ENCODE measurements at regions of chr5 and their contacts with region 1.

Region 1: DNA sequence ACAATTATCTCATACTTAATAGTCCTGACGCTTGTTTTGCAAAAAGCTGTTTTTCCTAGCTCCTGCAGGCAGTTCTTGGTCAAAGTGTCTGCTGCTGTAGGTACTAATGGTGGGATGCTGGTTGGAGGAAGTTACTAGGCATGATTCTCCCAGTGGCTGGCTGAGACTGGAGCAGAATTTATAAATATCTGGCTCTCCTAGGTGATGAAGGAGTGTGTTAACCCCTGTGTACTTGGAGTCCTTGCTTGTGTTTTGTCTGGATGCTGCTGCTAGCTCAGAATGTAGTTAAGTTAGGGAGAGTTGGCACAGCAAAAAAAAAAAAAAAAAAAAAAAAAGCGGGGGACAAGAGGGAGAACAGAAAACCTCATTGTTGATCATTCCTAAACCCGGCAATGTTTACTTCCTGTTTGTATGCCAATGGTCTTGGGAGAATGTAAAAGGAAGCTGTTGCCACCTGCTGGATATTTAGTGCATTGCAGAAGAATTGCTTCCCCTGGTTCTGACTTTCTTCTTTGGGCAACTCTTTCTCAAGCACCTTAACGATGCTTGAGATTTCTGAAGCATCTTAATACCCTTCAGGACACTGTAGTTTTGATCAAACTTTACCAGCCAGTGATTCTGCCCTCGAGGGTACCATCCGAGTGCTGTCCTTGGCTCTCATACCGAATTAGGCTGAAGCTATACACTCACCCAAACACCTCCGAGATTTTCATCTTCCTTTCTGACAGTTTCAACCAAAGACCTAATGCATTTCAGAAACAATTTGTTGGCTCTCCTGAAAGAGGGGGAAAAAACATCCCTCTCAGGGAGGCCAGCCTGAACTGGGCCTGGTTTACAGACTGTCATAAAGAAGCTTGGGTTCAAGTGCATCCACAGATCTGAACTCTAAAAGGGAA is 71.7 kb upstream of the WWC1 start:
- DNase-seq: peak; percentile 28
- H3K4me3 Mint-ChIP-seq: no peak overlapping the region
- H3K27ac Mint-ChIP-seq: no peak overlapping the region
- H3K4me1 Mint-ChIP-seq: peaks cover 6% of the 10 kb centered on the region
- H3K27me3 Mint-ChIP-seq: peaks cover 19% of the 10 kb centered on the region

Region 2: DNA sequence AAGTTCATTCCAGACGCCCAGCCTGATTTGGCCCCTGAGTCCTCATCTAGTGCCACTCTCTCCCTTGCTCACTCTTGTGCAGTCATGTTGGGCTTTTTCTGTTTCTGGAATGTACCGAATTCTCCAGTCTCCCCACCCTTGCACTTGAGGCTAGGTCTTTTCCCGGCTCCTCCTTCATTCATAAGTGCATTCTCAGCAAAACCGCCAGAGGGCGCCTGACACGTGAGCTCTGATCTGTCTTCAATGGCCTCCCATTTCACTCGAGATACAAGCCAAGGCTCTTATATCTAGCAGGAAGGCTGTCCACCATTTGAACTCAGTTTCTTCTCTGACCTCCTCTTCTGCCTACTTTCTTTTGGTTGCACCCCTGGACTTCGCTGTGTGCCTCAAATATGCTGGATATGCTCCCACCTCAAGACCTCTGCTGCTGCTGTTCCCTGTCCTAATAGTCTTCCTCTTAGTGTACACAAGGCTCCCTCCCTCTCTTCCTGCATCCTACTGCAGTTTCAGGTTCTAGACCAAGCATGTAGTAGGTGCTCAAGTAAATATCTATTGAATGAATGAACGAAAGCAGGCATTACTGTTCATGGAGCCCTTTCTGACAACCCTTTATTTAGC is 496.4 kb before region 1 on chr5:
- intact Hi-C with region 1: loop called (anchors 1 kb)
- DNase-seq: peak; percentile 48
- H3K4me3 Mint-ChIP-seq: no peak overlapping the region
- H3K27ac Mint-ChIP-seq: no peak overlapping the region
- H3K4me1 Mint-ChIP-seq: peaks cover 1% of the 10 kb centered on the region
- H3K27me3 Mint-ChIP-seq: no peaks in the 10 kb centered on the region

Region 3: GRCh38 chr5:168114444-168115017 is 105.2 kb before region 1 on chr5:
- intact Hi-C with region 1: loop called (anchors 1 kb)
- DNase-seq: peak; percentile 12
- H3K4me3 Mint-ChIP-seq: no peak overlapping the region
- H3K27ac Mint-ChIP-seq: no peak overlapping the region
- H3K4me1 Mint-ChIP-seq: peaks cover 3% of the 10 kb centered on the region
- H3K27me3 Mint-ChIP-seq: peaks cover 9% of the 10 kb centered on the region